Posterior vena cava (tissue), 2 donors: ENCODE measurements at regions of chr18 and their contacts with region 1.

Region 1: DNA sequence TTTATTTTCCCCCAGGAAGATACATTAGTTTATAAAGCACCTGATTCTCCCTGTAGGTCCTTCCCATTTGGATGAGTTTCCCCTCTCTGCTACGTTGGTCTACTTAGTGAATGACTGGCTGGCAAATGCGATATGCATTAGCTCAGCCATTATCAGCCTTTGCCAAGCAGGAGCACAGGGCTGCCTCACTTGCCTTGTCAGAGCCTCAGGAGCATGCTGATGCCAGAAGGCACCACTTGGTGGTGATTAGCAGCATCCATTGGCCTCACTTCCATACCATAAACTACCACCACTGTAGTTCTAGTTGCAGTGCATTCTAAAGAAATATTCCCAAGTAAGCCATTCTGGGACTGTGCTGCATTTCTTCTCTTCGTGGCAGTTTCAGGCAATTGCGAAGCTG is 442.8 kb upstream of the CHST9 start:
- DNase-seq: no peak

Region 2: GRCh38 chr18:27558388-27559155 is 69.4 kb before region 1 on chr18:
- intact Hi-C with region 1: loop called in 1 of 2 experiments (anchors 2 kb)
- DNase-seq: no peak

Region 3: GRCh38 chr18:27695503-27695902 is 67.6 kb after region 1 on chr18:
- intact Hi-C with region 1: no loop called
- DNase-seq: no peak